ENCODE measurements at regions of chr16 and their contacts with region 1.

Region 1: GRCh38 chr16:3789373-3790099 is 72.2 kb upstream of the TRAP1 start:
- DNase-seq: no peak
- ATAC-seq: no peak
- H3K4me3 ChIP-seq: no peak overlapping the region
- H3K27ac ChIP-seq: no peak overlapping the region
- H3K4me1 ChIP-seq: no peaks in the 10 kb centered on the region
- H3K27me3 ChIP-seq: no peaks in the 10 kb centered on the region
- CTCF ChIP-seq: no peak
- EP300 ChIP-seq: no peak
- POLR2A ChIP-seq: no peak
- RAD21 ChIP-seq: no peak

Region 2: DNA sequence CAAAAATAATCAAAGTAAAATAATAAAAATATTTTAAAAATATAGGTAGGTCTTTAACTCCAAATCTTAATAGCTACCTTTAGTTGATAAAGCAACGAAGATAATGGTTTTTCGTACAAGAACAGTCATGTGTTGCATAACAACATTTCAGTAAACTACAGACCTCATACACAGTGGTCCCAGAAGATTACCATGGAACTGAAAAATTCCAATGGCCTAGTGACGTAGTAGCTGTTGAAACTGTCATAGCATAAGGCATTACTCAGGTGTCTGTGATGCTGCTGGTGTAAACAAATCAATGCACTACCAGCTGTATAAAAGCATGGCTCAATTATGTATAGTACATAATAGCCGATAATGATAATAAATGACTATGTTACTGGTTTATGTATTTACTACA is 47.1 kb after region 1 on chr16:
- CTCF ChIA-PET with region 1: no interaction called
- POLR2A ChIA-PET with region 1: no interaction called
- in situ Hi-C with region 1: no loop called
- intact Hi-C with region 1: loop called (anchors 1 kb)
- DNase-seq: no peak
- ATAC-seq: no peak
- H3K4me3 ChIP-seq: no peak overlapping the region
- H3K27ac ChIP-seq: no peak overlapping the region
- H3K4me1 ChIP-seq: no peaks in the 10 kb centered on the region
- H3K27me3 ChIP-seq: no peaks in the 10 kb centered on the region
- CTCF ChIP-seq: no peak
- EP300 ChIP-seq: no peak
- POLR2A ChIP-seq: no peak
- RAD21 ChIP-seq: no peak

Measured in HepG2 (cell line).